ENCODE measurements at regions of chr12 and their contacts with region 1.

Region 1: GRCh38 chr12:109494348-109494881 is 17.0 kb downstream of the UBE3B start:
- DNase-seq: no peak
- ATAC-seq: peak in 2 of 3 donors; percentile 22 to 46
- H3K4me3 ChIP-seq: no peak overlapping the region
- H3K4me3 Mint-ChIP-seq: no peak overlapping the region
- H3K27ac ChIP-seq: no peak overlapping the region
- H3K27ac Mint-ChIP-seq: peak overlapping the region; percentile 77 to 85
- H3K4me1 ChIP-seq: peaks cover 7% of the 10 kb centered on the region
- H3K4me1 Mint-ChIP-seq: peaks cover 24 to 36% of the 10 kb centered on the region in 2 donors
- H3K27me3 ChIP-seq: no peaks in the 10 kb centered on the region
- H3K27me3 Mint-ChIP-seq: no peaks in the 10 kb centered on the region
- CTCF ChIP-seq: no peak

Region 2: GRCh38 chr12:109428037-109428629 is 66.3 kb before region 1 on chr12:
- intact Hi-C with region 1: loop called (anchors 1 kb)
- DNase-seq: peak; percentile 77 to 85
- ATAC-seq: peak; percentile 88 to 96 (median 93)
- H3K4me3 ChIP-seq: no peak overlapping the region
- H3K4me3 Mint-ChIP-seq: no peak overlapping the region
- H3K27ac ChIP-seq: no peak overlapping the region
- H3K27ac Mint-ChIP-seq: no peak overlapping the region
- H3K4me1 ChIP-seq: peaks cover 7% of the 10 kb centered on the region
- H3K4me1 Mint-ChIP-seq: peaks cover 7 to 9% of the 10 kb centered on the region in 2 donors
- H3K27me3 ChIP-seq: no peaks in the 10 kb centered on the region
- H3K27me3 Mint-ChIP-seq: peaks cover 2 to 9% of the 10 kb centered on the region in 2 donors
- CTCF ChIP-seq: peak; percentile 90

Region 3: GRCh38 chr12:109449845-109450532 is 44.4 kb before region 1 on chr12:
- intact Hi-C with region 1: loop called (anchors 2 kb)
- DNase-seq: no peak
- ATAC-seq: peak; percentile 17 to 61 (median 28)
- H3K4me3 ChIP-seq: no peak overlapping the region
- H3K4me3 Mint-ChIP-seq: peak overlapping the region; percentile 88
- H3K27ac ChIP-seq: peak overlapping the region; percentile 55
- H3K27ac Mint-ChIP-seq: peak overlapping the region; percentile 92 to 93
- H3K4me1 ChIP-seq: peaks cover 61% of the 10 kb centered on the region
- H3K4me1 Mint-ChIP-seq: peaks cover 66 to 69% of the 10 kb centered on the region in 2 donors
- H3K27me3 ChIP-seq: no peaks in the 10 kb centered on the region
- H3K27me3 Mint-ChIP-seq: no peaks in the 10 kb centered on the region
- CTCF ChIP-seq: peak; percentile 14

Region 4: DNA sequence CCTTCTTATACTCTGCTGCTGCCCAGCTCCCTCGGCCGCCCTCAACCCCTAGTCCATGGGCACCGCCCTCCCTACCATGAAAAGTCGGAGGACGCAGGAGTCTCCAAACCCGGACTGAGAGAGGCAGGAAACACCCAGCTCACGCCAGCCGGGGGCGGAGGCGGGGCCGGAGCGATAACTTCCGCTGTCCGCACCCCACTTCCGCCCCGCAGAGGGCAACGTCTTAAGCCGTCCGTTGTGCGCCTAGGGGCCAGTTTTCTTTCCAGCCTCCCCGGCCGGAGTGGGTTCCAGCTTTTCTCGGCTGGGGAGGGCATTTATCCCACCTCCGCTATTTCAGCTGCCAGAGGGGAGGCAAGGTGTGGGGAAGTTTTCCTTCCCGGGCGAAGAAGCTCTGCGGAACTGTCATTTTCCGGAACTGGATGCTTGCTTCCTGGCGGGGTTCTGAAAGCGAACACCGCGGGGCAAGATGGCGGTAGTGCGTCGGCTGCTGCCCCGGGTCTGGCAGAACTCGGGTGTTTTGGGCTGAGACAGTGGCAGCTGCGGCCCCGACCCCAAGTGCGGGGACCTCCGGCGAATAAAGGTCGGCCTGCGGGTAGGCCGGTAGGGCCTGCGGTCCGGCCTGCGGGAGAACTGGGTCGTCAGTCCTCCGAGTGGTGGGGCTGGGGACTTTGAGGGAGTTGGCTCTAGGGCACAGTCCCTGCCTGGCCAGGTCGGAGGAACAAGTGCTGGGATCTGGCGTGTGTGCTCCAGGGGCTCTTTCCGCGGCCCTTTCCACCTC is 17.0 kb before region 1 on chr12 and contains the starts of genes KCTD10 and UBE3B:
- intact Hi-C with region 1: loop called (anchors 2 kb)
- DNase-seq: peak; percentile 90 to 94
- ATAC-seq: peak; percentile 93 to 96 (median 94)
- H3K4me3 ChIP-seq: peak within 1 kb of the TSS; percentile 93
- H3K4me3 Mint-ChIP-seq: peak within 1 kb of the TSS; percentile 94
- H3K27ac ChIP-seq: peak within 1 kb of the TSS; percentile 81
- H3K27ac Mint-ChIP-seq: peak within 1 kb of the TSS; percentile 95
- H3K4me1 ChIP-seq: peaks cover 21% of the 10 kb centered on the region
- H3K4me1 Mint-ChIP-seq: peaks cover 50 to 58% of the 10 kb centered on the region in 2 donors
- H3K27me3 ChIP-seq: no peaks in the 10 kb centered on the region
- H3K27me3 Mint-ChIP-seq: no peaks in the 10 kb centered on the region
- CTCF ChIP-seq: no peak
- total RNA-seq, gene KCTD10: 76.0 to 141 (median 79.0) TPM
- total RNA-seq, gene UBE3B: 32.2 to 46.7 (median 39.5) TPM

Region 5: GRCh38 chr12:109539508-109539907 is 45.1 kb after region 1 on chr12:
- intact Hi-C with region 1: no loop called
- DNase-seq: no peak
- ATAC-seq: no peak
- H3K4me3 ChIP-seq: no peak overlapping the region
- H3K4me3 Mint-ChIP-seq: no peak overlapping the region
- H3K27ac ChIP-seq: no peak overlapping the region
- H3K27ac Mint-ChIP-seq: no peak overlapping the region
- H3K4me1 ChIP-seq: peaks cover 16% of the 10 kb centered on the region
- H3K4me1 Mint-ChIP-seq: peaks cover 21 to 25% of the 10 kb centered on the region in 2 donors
- H3K27me3 ChIP-seq: no peaks in the 10 kb centered on the region
- H3K27me3 Mint-ChIP-seq: no peaks in the 10 kb centered on the region
- CTCF ChIP-seq: no peak

Measured in natural killer cell (primary cell).